Tibial artery (tissue), 4 donors: ENCODE measurements at regions of chr1 and their contacts with region 1.

Region 1: DNA sequence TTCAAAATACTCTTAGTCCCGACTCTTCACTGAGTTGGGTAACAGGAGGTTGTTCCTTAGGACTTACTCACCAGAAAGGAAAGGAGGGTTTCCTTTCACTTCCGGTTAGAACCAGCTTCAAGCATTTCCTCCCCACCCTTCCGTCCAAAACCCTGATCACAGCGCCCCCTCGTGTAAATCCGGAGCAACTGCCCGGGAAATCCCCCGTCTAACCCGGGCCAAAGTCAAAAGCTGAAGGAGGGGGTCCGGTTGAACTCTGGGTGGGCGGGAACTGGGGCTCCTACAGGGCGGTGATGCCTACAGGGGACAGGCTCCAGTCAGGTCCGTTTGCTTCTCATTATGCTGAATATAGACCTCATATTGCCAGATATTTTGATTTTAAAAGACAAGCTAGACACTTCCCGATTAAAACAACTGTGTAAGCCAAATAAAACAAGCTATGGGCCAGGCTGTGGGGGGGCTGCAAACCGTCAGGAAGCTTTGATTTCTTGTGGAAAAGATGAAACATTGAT is 15.0 kb upstream of the MTARC2 start:
- DNase-seq: peak; percentile 74 to 89
- H3K4me3 ChIP-seq: peak overlapping the region; percentile 33 to 44
- H3K27ac ChIP-seq: peak overlapping the region; percentile 85
- H3K4me1 ChIP-seq: peaks cover 0 to 30% (median 23%) of the 10 kb centered on the region in 4 donors
- H3K27me3 ChIP-seq: no peaks in the 10 kb centered on the region
- CTCF ChIP-seq: peak; percentile 84 to 92

Region 2: DNA sequence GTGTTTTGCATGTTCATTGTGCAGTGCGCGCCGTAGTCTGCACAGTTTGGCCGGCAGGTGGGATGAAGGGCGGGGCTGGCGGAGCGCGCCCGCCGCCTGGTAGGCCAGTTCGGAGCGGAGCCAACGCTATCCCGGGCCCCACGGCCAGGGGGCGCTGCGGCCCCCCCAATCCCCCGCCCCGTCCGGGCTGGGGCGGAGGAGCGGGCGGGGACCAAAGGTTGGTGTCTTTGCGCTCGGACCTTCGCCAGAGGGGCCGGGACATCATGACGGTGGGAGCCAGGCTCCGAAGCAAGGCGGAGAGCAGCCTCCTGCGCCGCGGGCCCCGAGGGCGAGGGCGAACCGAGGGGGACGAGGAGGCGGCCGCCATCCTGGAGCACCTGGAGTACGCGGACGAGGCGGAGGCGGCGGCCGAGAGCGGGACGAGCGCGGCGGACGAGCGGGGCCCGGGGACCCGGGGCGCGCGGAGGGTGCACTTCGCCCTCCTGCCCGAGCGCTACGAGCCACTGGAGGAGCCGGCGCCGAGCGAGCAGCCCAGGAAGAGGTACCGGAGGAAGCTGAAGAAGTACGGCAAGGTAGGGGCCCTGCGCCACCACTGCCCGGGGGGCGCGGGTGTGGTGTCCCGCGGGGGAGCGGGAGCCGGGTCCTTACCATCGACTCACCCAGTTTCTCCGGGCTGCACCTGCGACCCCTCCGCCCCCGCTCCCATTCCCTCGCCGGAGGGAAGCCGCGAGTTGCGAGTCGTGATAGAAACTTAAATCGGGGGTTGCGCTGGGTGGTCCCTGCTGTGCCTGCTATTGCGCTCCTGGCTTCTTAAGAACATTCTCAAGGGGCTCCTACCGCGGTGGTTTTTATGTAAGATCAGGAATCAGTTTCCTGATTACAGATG is 42.8 kb before region 1 on chr1 and contains the start of gene C1orf115:
- intact Hi-C with region 1: loop called (anchors 5 kb)
- DNase-seq: peak; percentile 66 to 80
- H3K4me3 ChIP-seq: peak within 1 kb of the TSS; percentile 66 to 70
- H3K27ac ChIP-seq: peak within 1 kb of the TSS; percentile 36 to 41
- H3K4me1 ChIP-seq: peaks cover 0 to 15% (median 5%) of the 10 kb centered on the region in 4 donors
- H3K27me3 ChIP-seq: no peaks in the 10 kb centered on the region
- CTCF ChIP-seq: peak; percentile 91 to 99

Region 3: DNA sequence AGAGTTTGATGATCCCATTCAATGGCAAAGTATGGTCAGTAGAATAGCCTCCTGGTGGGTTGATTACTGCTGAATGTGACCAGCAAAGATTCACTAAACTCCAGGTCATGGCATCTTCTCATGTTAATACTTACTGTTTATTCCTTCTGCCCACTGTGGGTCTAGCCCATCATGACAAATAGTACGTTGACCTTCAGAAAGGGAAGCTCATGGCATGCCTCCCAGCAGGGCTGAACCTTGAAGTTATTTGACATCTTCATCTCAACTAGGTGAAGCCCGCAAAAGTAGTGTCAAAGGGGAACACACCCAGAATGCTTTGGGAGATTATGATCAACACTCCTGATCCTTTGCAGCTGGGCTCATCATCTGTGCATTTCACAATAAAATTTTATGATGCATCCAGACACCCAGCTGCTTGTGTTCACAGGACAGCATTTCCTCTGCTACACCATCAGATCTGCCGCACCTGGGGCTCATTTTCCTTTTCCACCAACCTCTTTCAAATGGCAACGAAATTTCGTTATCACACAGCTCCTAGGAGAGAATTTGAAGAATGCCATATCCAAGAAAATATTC is 195.7 kb after region 1 on chr1:
- intact Hi-C with region 1: no loop called
- DNase-seq: no peak
- H3K4me3 ChIP-seq: no peak overlapping the region
- H3K27ac ChIP-seq: no peak overlapping the region
- H3K4me1 ChIP-seq: no peaks in the 10 kb centered on the region
- H3K27me3 ChIP-seq: no peaks in the 10 kb centered on the region
- CTCF ChIP-seq: no peak